CD8-positive, alpha-beta memory T cell (primary cell): ENCODE measurements at regions of chr5 and their contacts with region 1.

Region 1: GRCh38 chr5:139446956-139447779 is 7.8 kb upstream of the DNAJC18 start:
- DNase-seq: no peak
- H3K4me3 ChIP-seq: no peak overlapping the region
- H3K4me3 Mint-ChIP-seq: no peak overlapping the region
- H3K27ac ChIP-seq: no peak overlapping the region
- H3K27ac Mint-ChIP-seq: peak overlapping the region in 2 of 8 donors; percentile 10 to 43
- H3K4me1 ChIP-seq: peaks cover 35% of the 10 kb centered on the region
- H3K4me1 Mint-ChIP-seq: peaks cover 23 to 43% (median 41%) of the 10 kb centered on the region in 3 donors
- H3K27me3 ChIP-seq: no peaks in the 10 kb centered on the region
- H3K27me3 Mint-ChIP-seq: peaks cover 0 to 1% of the 10 kb centered on the region in 2 donors

Region 2: GRCh38 chr5:139222335-139222734 is 224.8 kb before region 1 on chr5:
- CTCF ChIA-PET with region 1: no interaction called
- POLR2A ChIA-PET with region 1: no interaction called
- DNase-seq: no peak
- H3K4me3 ChIP-seq: no peak overlapping the region
- H3K4me3 Mint-ChIP-seq: no peak overlapping the region
- H3K27ac ChIP-seq: no peak overlapping the region
- H3K27ac Mint-ChIP-seq: no peak overlapping the region
- H3K4me1 ChIP-seq: no peaks in the 10 kb centered on the region
- H3K4me1 Mint-ChIP-seq: no peaks in the 10 kb centered on the region
- H3K27me3 ChIP-seq: no peaks in the 10 kb centered on the region
- H3K27me3 Mint-ChIP-seq: peaks cover 2 to 15% of the 10 kb centered on the region in 2 donors

Region 3: GRCh38 chr5:139458580-139459406 is 11.6 kb after region 1 on chr5:
- CTCF ChIA-PET with region 1: interaction called, 7 read pairs
- POLR2A ChIA-PET with region 1: interaction called, 10 read pairs
- DNase-seq: peak; percentile 67 to 91 (median 85)
- H3K4me3 ChIP-seq: no peak overlapping the region
- H3K4me3 Mint-ChIP-seq: peak overlapping the region in 6 of 7 donors; percentile 41 to 81 (median 64)
- H3K27ac ChIP-seq: no peak overlapping the region
- H3K27ac Mint-ChIP-seq: peak overlapping the region; percentile 90 to 98 (median 92)
- H3K4me1 ChIP-seq: peaks cover 60% of the 10 kb centered on the region
- H3K4me1 Mint-ChIP-seq: peaks cover 48 to 66% (median 59%) of the 10 kb centered on the region in 3 donors
- H3K27me3 ChIP-seq: no peaks in the 10 kb centered on the region
- H3K27me3 Mint-ChIP-seq: peaks cover 0 to 2% of the 10 kb centered on the region in 2 donors